Gastrocnemius medialis (tissue), 4 donors: ENCODE measurements at regions of chr14 and their contacts with region 1.

Region 1: DNA sequence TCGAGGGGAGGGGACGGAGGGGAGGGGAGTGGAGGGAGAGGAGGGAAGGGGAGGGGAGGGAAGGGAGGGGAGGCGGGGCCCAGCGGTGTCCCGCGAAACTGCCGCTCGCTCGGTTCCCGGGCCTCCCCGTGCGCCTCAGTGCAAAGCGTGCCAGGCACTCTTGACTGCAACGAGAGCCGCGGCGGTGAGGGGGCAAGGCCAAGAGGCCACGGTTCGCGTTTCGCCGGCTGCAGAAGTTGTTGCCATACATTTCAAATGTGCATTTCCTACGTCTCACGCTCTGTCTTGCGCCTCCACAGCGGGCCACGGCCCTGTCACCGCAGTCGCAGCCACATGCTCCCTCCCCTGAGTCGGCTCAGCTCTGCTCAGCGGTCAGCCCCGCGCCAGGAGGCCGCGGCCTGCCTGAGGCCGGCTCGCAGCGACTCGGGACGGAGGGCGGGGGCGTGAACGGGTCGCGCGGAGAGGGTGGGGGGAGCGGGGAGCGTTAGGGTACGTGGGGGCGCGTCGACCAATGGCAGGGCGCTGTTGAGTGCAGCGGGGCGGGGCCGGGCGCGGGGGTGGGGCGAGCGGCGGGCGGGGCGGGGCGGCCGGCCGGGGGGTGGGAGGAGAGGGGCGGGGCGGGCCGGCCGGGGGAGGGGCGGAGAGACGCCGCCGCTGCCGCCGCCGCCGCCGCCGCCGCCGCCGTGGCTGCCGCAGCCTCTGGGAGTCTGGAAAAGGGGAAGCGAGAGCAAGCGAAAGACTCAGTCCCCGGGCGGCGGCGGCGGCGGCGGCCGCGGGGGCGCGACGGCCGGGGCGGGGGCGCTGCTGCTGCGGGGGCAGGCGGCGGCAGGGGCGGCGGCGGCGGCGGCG is at the start of gene PPP2R5C:
- DNase-seq: peak; percentile 91 to 92
- ATAC-seq: peak; percentile 69 to 72
- H3K4me3 ChIP-seq: peak within 1 kb of the TSS; percentile 83 to 99 (median 93)
- H3K27ac ChIP-seq: peak within 1 kb of the TSS; percentile 93 to 98 (median 96)
- H3K4me1 ChIP-seq: peaks cover 8 to 16% of the 10 kb centered on the region in 2 donors
- H3K27me3 ChIP-seq: no peaks in the 10 kb centered on the region
- CTCF ChIP-seq: no peak
- POLR2A ChIP-seq: peak; percentile 72 to 74
- total RNA-seq, gene PPP2R5C: 35.4 to 65.9 (median 49.3) TPM

Region 2: DNA sequence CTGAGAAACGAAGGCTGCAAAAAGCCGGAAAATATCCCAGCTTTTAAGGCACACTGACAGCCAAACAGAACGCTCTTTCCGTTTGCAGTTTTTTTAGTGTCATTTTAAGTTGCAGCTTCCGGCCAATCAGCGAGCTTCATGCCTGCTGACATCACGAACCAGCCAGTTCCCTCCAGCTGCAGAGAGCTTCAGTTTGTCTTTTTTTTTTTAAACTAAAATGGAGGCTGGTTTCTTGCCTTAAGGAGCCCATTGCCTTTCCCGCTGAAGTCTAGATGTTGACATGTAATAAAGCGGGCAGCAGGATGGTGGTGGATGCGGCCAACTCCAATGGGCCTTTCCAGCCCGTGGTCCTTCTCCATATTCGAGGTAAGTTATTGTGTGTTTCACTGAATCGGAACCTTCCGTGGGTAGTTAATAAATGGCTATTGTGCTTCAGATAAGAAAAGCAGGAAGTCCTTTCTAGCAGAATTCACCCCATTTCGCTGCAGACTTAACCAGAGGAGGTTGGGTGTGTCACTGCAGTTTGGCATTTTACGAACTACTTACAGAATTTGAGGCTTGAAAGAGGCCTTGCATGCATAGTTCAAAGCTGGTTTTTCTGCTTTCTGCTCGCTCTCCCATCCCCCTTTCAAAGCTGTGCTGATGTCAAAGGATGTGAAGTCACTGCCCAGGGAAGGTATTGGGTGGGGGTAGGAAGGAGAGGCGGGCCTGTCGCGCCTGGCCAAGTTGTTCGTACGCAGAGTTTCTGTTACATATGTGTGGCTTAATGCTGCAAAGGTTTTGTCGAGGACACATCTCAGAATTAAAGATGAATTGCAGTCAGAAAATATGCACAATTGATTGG is 48.6 kb after region 1 on chr14:
- in situ Hi-C with region 1: no loop called
- intact Hi-C with region 1: loop called (anchors 5 kb)
- DNase-seq: peak; percentile 79 to 87
- ATAC-seq: peak; percentile 91 to 93
- H3K4me3 ChIP-seq: peak overlapping the region; percentile 67 to 82 (median 72)
- H3K27ac ChIP-seq: peak overlapping the region; percentile 91 to 96 (median 93)
- H3K4me1 ChIP-seq: peaks cover 43 to 50% of the 10 kb centered on the region in 2 donors
- H3K27me3 ChIP-seq: no peaks in the 10 kb centered on the region
- CTCF ChIP-seq: no peak
- POLR2A ChIP-seq: peak; percentile 44 to 74

Region 3: GRCh38 chr14:101823511-101824120 is 62.4 kb after region 1 on chr14:
- in situ Hi-C with region 1: no loop called
- intact Hi-C with region 1: loop called (anchors 5 kb)
- DNase-seq: peak; percentile 37 to 46
- ATAC-seq: peak; percentile 57 to 86
- H3K4me3 ChIP-seq: peak overlapping the region; percentile 8 to 35 (median 27)
- H3K27ac ChIP-seq: peak overlapping the region; percentile 75 to 88 (median 84)
- H3K4me1 ChIP-seq: peaks cover 52 to 56% of the 10 kb centered on the region in 2 donors
- H3K27me3 ChIP-seq: no peaks in the 10 kb centered on the region
- CTCF ChIP-seq: no peak
- POLR2A ChIP-seq: no peak

Region 4: GRCh38 chr14:101947906-101948665 is 186.8 kb after region 1 on chr14:
- in situ Hi-C with region 1: loop called in 3 of 4 experiments (anchors 25 kb)
- intact Hi-C with region 1: loop called (anchors 1 kb)
- DNase-seq: peak; percentile 100
- ATAC-seq: peak; percentile 95 to 99
- H3K4me3 ChIP-seq: peak overlapping the region; percentile 77 to 96 (median 89)
- H3K27ac ChIP-seq: peak overlapping the region; percentile 95 to 100 (median 99)
- H3K4me1 ChIP-seq: peaks cover 17 to 20% of the 10 kb centered on the region in 2 donors
- H3K27me3 ChIP-seq: no peaks in the 10 kb centered on the region
- CTCF ChIP-seq: peak in 2 of 5 experiments; percentile 9 to 36
- POLR2A ChIP-seq: peak; percentile 74 to 90

Region 5: DNA sequence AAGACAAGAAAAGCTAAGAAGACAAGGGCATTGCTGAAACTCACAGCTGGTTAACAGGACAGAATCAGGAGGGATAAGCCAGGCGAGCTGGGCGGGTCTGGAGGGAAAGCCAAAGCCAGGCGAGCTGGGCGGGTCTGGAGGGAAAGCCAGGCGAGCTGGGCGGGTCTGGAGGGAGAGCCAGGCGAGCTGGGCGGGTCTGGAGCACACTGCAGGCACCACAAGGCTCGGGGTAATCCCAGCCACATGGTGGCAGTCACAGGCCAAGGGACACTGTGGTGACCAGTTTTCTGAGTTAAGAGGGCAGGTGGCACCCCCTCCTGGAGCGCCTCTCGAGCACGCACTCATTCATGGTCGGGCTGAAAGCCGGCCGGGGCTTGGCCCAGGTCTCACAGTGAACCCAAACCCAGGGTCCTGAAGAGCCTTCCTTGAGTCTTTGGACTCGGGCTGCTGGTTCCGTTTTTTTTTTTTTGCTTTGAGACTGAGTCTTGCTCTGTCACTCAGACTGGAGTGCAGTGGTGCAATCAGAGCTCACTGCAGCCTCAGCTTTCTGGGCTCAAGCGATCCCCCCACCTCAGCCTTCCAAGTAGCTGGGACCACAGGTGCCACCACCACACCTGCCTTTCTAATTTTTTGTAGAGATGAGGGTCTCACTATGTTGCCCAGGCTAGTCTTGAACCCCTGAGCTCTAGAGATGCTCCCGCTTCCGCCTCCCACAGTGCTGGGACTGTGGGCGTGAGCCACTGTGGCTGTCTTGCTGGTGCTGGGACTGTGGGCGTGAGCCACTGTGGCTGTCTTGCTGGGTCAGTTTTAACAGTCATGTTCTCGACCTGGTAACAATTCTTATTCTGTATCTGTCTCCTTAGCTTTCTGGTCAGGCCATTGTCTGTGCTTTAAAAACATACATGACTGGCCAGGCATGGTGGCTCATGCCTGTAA is 285.4 kb after region 1 on chr14:
- in situ Hi-C with region 1: no loop called
- intact Hi-C with region 1: loop called (anchors 5 kb)
- DNase-seq: peak; percentile 79 to 93
- ATAC-seq: peak; percentile 54 to 87
- H3K4me3 ChIP-seq: no peak overlapping the region
- H3K27ac ChIP-seq: peak overlapping the region; percentile 58 to 77 (median 70)
- H3K4me1 ChIP-seq: peaks cover 36% of the 10 kb centered on the region in 2 donors
- H3K27me3 ChIP-seq: no peaks in the 10 kb centered on the region
- CTCF ChIP-seq: peak; percentile 43 to 69 (median 56)
- POLR2A ChIP-seq: no peak

Region 6: DNA sequence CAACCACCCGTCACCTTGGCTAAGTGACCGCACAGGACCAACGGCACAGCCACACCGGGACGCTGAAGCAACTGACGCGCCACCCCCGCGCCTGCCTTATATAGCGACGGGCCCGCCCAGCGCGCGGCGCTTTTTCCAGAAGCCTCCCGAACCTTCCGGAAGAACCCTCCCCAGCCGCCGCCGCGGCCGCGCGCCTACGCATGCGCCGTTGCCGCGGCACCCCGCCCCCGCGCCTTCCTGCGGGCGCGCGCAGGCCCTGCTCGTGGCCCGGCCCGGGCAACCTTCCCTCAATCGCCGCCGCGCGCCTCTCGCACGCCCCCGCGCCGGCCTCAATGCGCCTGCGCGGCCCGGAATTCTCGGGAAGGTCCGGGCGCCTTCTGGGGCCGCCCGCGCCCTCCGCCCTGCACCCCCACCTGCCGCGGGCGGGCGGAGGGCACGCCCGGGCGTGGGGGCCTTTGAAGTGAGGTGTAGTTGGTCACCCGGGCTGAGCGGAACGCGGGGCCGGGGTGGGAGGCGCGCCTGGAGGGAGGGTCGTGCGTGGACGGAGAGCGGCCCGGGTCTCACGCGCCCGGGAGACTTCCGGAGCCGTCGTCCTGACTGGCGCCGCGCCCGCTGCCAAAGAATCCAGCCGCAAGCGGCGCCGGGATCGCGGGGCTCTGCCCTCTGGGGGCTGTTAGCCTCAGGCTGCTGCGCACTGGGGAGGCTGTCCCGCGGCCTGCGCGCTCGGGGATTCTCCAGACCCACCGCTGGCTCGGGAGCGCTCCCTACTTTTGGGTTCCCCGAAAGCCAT is 325.9 kb after region 1 on chr14 and contains the start of gene HSP90AA1:
- in situ Hi-C with region 1: no loop called
- intact Hi-C with region 1: loop called (anchors 2 kb)
- DNase-seq: peak; percentile 84 to 93
- ATAC-seq: peak; percentile 88 to 90
- H3K4me3 ChIP-seq: peak within 1 kb of the TSS; percentile 72 to 93 (median 90)
- H3K27ac ChIP-seq: peak within 1 kb of the TSS; percentile 96 to 99 (median 99)
- H3K4me1 ChIP-seq: peaks cover 26 to 43% of the 10 kb centered on the region in 2 donors
- H3K27me3 ChIP-seq: no peaks in the 10 kb centered on the region
- CTCF ChIP-seq: peak in 2 of 5 experiments; percentile 25 to 32
- POLR2A ChIP-seq: peak; percentile 97 to 99
- total RNA-seq, gene HSP90AA1: 227 to 609 (median 488) TPM

Region 7: GRCh38 chr14:102139248-102140026 is 378.2 kb after region 1 on chr14 and contains the start of gene WDR20:
- in situ Hi-C with region 1: no loop called
- intact Hi-C with region 1: loop called (anchors 1 kb)
- DNase-seq: peak; percentile 98
- ATAC-seq: peak; percentile 97
- H3K4me3 ChIP-seq: peak within 1 kb of the TSS; percentile 63 to 99 (median 87)
- H3K27ac ChIP-seq: peak within 1 kb of the TSS; percentile 85 to 93 (median 92)
- H3K4me1 ChIP-seq: peaks cover 20 to 25% of the 10 kb centered on the region in 2 donors
- H3K27me3 ChIP-seq: no peaks in the 10 kb centered on the region
- CTCF ChIP-seq: no peak
- POLR2A ChIP-seq: peak; percentile 55 to 59
- total RNA-seq, gene WDR20: 18.1 to 49.7 (median 21.0) TPM